ENCODE measurements at regions of chr14 and their contacts with region 1.

Region 1: DNA sequence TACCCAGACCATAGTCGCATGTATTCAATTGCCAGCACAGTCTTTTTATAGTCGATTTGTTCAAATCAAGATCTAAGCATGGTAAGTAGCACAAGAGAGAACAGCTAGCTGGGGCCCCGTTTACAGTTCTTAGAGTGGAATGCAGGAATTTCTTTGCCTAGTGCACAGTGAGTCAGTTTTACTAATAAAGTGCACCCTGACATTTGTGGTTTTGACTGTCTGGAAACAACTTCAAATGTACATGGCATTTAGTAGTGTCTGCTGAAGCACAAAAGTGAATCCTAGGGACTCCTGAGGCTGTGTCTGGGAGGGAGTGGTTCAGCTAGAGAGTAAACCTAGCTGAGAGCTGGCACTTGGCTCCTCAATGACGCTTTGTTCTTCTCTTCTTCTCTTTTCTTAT is 64.9 kb downstream of the TMX1 start:
- DNase-seq: peak; percentile 93
- H3K4me3 ChIP-seq: no peak overlapping the region
- H3K27ac ChIP-seq: peak overlapping the region; percentile 44
- H3K4me1 ChIP-seq: peaks cover 30% of the 10 kb centered on the region
- H3K27me3 ChIP-seq: no peaks in the 10 kb centered on the region
- CTCF ChIP-seq: no peak

Region 2: GRCh38 chr14:51382506-51382905 is 77.6 kb after region 1 on chr14:
- CTCF ChIA-PET with region 1: no interaction called
- dilution Hi-C with region 1: no loop called
- in situ Hi-C with region 1: no loop called
- intact Hi-C with region 1: loop called (anchors 5 kb)
- DNase-seq: peak; percentile 99
- H3K4me3 ChIP-seq: no peak overlapping the region
- H3K27ac ChIP-seq: peak overlapping the region; percentile 92
- H3K4me1 ChIP-seq: peaks cover 49% of the 10 kb centered on the region
- H3K27me3 ChIP-seq: no peaks in the 10 kb centered on the region
- CTCF ChIP-seq: no peak